ENCODE measurements at regions of chr2 and their contacts with region 1.

Region 1: GRCh38 chr2:197705121-197705911 is at the start of gene MARS2:
- DNase-seq: peak; percentile 98
- H3K4me3 Mint-ChIP-seq: peak within 1 kb of the TSS; percentile 85
- H3K27ac Mint-ChIP-seq: peak within 1 kb of the TSS; percentile 96
- H3K4me1 Mint-ChIP-seq: peaks cover 38% of the 10 kb centered on the region
- H3K27me3 Mint-ChIP-seq: peaks cover 5% of the 10 kb centered on the region
- total RNA-seq, gene MARS2: 23.1 and 23.2 TPM in 2 replicates

Region 2: DNA sequence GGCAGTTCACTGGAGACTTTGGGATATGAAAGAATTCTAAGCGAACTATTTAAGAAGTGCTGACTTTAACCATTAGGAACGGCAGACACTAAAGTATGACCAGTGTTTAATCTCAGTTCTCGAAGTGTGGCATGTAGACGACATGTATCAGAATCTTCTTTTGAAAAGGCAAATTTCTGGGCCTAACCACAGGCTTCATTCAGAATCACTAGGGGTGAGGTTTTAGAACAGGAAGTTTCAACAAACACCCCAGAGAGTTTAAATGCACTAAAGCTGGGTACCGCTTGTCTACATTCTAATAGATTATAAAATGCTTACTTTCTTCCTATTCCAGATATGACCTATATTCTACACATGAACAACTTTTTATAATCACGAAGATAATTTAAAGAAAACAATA is 575.0 kb before region 1 on chr2:
- intact Hi-C with region 1: loop called (anchors 10 kb)
- DNase-seq: peak; percentile 77
- H3K4me3 Mint-ChIP-seq: peak overlapping the region; percentile 19
- H3K27ac Mint-ChIP-seq: peak overlapping the region; percentile 83
- H3K4me1 Mint-ChIP-seq: peaks cover 63% of the 10 kb centered on the region
- H3K27me3 Mint-ChIP-seq: no peaks in the 10 kb centered on the region

Region 3: GRCh38 chr2:197453161-197453914 is 252.0 kb before region 1 on chr2 and contains the start of gene COQ10B:
- intact Hi-C with region 1: loop called (anchors 1 kb)
- DNase-seq: peak; percentile 100
- H3K4me3 Mint-ChIP-seq: peak within 1 kb of the TSS; percentile 100
- H3K27ac Mint-ChIP-seq: peak within 1 kb of the TSS; percentile 100
- H3K4me1 Mint-ChIP-seq: peaks cover 26% of the 10 kb centered on the region
- H3K27me3 Mint-ChIP-seq: no peaks in the 10 kb centered on the region
- total RNA-seq, gene COQ10B: 20.1 TPM in 2 replicates

Region 4: GRCh38 chr2:197515739-197516392 is 189.4 kb before region 1 on chr2 and contains the start of gene MOB4:
- intact Hi-C with region 1: loop called (anchors 1 kb)
- DNase-seq: peak; percentile 99
- H3K4me3 Mint-ChIP-seq: peak within 1 kb of the TSS; percentile 94
- H3K27ac Mint-ChIP-seq: peak within 1 kb of the TSS; percentile 91
- H3K4me1 Mint-ChIP-seq: peaks cover 21% of the 10 kb centered on the region
- H3K27me3 Mint-ChIP-seq: no peaks in the 10 kb centered on the region
- total RNA-seq, gene MOB4: 19.2 and 22.6 TPM in 2 replicates

Region 5: GRCh38 chr2:198004921-198005829 is 299.9 kb after region 1 on chr2:
- intact Hi-C with region 1: loop called (anchors 10 kb)
- DNase-seq: peak; percentile 79
- H3K4me3 Mint-ChIP-seq: peak overlapping the region; percentile 66
- H3K27ac Mint-ChIP-seq: peak overlapping the region; percentile 83
- H3K4me1 Mint-ChIP-seq: peaks cover 31% of the 10 kb centered on the region
- H3K27me3 Mint-ChIP-seq: no peaks in the 10 kb centered on the region

Region 6: GRCh38 chr2:198296665-198297308 is 591.5 kb after region 1 on chr2:
- intact Hi-C with region 1: loop called (anchors 10 kb)
- DNase-seq: peak; percentile 84
- H3K4me3 Mint-ChIP-seq: no peak overlapping the region
- H3K27ac Mint-ChIP-seq: no peak overlapping the region
- H3K4me1 Mint-ChIP-seq: no peaks in the 10 kb centered on the region
- H3K27me3 Mint-ChIP-seq: peaks cover 2% of the 10 kb centered on the region

Measured in activated CD4-positive, alpha-beta T cell treated with anti-CD3 and anti-CD28 coated beads, Interleukin-2, amount 10 ng/mL, durations not matched to agents 24 days and 14 days (primary cell).